ENCODE measurements at regions of chr2 and their contacts with region 1.

Region 1: GRCh38 chr2:55175254-55176025 is 56.7 kb downstream of the CLHC1 start:
- DNase-seq: peak; percentile 51
- H3K4me3 Mint-ChIP-seq: no peak overlapping the region
- H3K27ac Mint-ChIP-seq: peak overlapping the region; percentile 1
- H3K4me1 Mint-ChIP-seq: peaks cover 10% of the 10 kb centered on the region
- H3K27me3 Mint-ChIP-seq: no peaks in the 10 kb centered on the region
- CTCF ChIP-seq: peak; percentile 70

Region 2: DNA sequence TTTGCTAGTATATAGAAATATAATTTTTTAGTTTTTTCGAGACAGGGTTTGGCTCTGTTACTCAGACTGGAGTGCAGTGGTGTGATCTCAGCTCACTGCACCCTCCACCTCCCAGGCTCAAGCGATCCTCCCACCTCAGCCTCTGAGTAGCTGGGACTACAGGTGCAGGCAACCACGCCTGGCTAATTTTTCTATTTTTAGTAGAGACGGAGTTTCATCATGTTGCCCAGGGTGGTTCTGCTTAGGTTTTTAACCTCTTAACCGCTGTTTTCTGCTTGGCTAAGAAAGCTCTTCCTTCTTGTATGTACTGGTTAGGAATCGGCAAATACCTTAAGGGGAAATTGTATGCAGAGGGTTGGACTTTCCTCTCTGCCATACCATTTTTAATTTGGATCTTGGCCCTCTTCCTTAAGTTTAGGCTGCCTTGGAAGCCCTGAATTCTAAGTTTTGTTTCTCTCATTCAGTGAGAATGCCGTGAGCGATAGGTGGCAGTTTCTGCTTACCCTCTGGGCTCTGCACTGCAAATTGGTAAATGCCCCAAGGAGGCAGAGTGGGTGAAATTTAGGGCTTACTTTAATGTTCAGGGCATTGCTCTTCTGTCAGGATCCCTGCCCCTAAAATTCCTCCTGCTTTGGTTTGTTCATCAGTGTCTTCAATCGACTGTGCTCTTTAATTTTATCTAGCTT is 419.7 kb before region 1 on chr2:
- CTCF ChIA-PET with region 1: interaction called, 4 read pairs
- POLR2A ChIA-PET with region 1: no interaction called
- intact Hi-C with region 1: loop called (anchors 10 kb)
- DNase-seq: peak; percentile 47
- H3K4me3 Mint-ChIP-seq: peak overlapping the region; percentile 15
- H3K27ac Mint-ChIP-seq: peak overlapping the region; percentile 6
- H3K4me1 Mint-ChIP-seq: peaks cover 9% of the 10 kb centered on the region
- H3K27me3 Mint-ChIP-seq: no peaks in the 10 kb centered on the region
- CTCF ChIP-seq: peak; percentile 29

Region 3: DNA sequence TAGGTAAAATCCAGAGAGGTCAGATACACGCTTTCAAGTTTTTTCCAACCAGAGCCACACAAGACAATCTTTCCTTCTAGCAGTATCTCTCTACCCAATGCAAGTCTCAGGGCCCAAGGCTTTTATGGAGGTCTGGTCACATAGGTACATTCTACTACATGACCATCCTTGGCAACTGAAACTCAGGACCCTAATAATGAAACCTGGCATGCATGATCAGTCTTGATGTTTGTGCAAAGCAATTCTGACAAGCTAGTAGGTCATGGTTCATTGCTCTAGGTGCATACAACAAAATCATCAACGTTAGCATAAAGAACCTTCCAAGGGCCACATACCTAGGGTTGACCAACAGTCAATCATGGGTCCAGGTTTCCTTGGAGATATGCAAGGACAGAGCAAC is 277.4 kb after region 1 on chr2:
- CTCF ChIA-PET with region 1: no interaction called
- POLR2A ChIA-PET with region 1: no interaction called
- intact Hi-C with region 1: no loop called
- DNase-seq: no peak
- H3K4me3 Mint-ChIP-seq: no peak overlapping the region
- H3K27ac Mint-ChIP-seq: no peak overlapping the region
- H3K4me1 Mint-ChIP-seq: no peaks in the 10 kb centered on the region
- H3K27me3 Mint-ChIP-seq: no peaks in the 10 kb centered on the region
- CTCF ChIP-seq: no peak

Measured in MCF 10A (cell line).